ENCODE measurements at regions of chr9 and their contacts with region 1.

Region 1: GRCh38 chr9:32431940-32432555 is 47.6 kb downstream of the ACO1 start:
- DNase-seq: no peak
- ATAC-seq: no peak

Region 2: GRCh38 chr9:32384364-32385151 is 47.5 kb before region 1 on chr9 and contains the start of gene ACO1:
- intact Hi-C with region 1: loop called (anchors 1 kb)
- DNase-seq: peak; percentile 95
- ATAC-seq: peak; percentile 99
- total RNA-seq, gene ACO1: 59.5 TPM

Region 3: GRCh38 chr9:32665101-32665500 is 233.1 kb after region 1 on chr9:
- intact Hi-C with region 1: no loop called
- DNase-seq: no peak
- ATAC-seq: no peak